Right ventricle myocardium inferior (tissue), 1 donor: ENCODE measurements at regions of chr2 and their contacts with region 1.

Region 1: DNA sequence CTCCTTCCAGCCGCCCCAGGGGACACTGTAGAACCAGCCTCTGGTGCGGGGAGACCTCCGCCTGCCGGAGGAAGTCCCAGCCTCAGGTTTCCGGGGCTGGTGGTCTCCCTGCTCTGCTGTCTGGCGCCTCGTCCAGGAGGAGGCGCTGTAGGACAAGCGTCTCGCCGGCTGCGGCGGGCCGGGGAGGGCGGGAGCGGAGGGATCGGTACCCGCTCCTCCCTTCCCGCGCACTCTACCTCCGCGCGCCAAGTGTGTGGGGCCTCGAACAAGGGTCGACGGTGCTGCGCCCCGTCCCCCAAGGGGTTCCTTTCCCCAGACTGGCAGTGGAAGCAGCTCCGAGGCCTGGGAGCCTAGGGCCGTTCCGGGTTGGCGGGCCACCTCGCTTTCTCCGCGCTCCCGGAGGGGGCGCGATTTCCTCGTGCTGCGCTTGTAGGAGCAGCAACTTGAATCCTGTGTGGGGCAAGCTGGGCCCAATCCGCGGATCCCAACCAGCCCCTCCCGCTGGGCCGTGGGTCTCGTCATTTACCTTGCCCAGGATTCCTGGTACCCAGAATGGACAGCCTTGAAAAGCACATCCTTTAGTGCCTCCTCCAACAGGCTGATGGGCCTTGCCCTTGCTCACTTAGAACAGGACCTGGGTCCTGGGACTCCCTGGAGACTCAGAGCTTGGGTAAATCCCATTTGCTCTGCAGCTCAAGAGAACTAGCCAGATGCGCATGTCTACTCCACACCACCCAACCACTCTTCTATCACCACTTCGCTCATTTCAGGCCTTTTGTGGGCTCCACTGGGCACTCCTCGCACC is 10.6 kb upstream of the HOXD4 start:
- DNase-seq: no peak
- ATAC-seq: peak; percentile 83

Region 2: GRCh38 chr2:176227874-176228273 is 87.2 kb after region 1 on chr2:
- intact Hi-C with region 1: no loop called
- DNase-seq: no peak
- ATAC-seq: no peak

Region 3: DNA sequence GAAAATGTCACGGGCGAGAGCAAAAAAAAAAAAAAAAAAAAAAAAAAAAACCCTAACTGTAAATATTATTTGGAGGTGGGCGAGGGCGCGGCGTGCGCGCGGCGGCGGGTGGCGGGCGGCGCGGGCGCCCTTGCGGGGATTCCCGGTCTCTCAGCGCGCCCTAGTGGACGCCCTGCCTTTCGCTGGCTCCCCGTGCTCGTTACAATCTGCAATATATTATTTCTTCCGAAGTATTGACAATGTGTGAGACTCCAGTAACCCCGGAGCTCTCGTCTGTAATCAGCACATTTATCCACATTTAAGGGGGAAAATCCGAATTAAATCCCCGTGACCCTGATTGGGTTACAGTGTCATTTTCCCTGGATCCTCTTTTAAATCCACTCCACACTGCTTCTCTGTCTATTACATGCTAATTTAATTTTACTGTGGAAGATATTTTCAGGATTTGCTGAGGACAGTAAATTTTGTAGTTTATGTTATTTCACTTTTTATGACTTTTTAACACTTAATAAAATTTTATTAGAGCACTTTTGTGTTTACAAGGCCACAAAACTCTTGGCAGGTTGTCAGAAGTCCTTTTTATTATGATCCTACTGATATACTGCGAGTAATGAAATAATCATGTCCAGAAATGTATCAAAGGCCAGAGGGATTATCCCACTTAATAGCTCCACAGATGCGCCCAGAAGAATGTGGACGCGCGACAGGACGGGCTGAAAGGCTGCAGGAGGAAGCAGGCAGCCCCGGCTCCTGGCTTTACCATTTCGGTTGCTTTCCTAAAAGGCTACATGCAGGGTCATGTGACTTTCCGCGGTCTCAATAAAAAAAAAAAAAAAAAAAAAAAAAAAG is 497.7 kb after region 1 on chr2:
- intact Hi-C with region 1: loop called (anchors 1 kb)
- DNase-seq: peak; percentile 76
- ATAC-seq: peak; percentile 91